Ovary (tissue), 10 donors: ENCODE measurements at regions of chr1 and their contacts with region 1.

Region 1: GRCh38 chr1:110766025-110766647 is 91.4 kb upstream of the KCNA3 start:
- DNase-seq: peak in 1 of 5 donors; percentile 37
- H3K4me3 ChIP-seq: no peak overlapping the region
- H3K27ac ChIP-seq: no peak overlapping the region
- H3K4me1 ChIP-seq: no peaks in the 10 kb centered on the region
- H3K27me3 ChIP-seq: no peaks in the 10 kb centered on the region
- CTCF ChIP-seq: peak in 2 of 3 donors; percentile 61 to 76
- EP300 ChIP-seq: no peak
- POLR2A ChIP-seq: no peak

Region 2: DNA sequence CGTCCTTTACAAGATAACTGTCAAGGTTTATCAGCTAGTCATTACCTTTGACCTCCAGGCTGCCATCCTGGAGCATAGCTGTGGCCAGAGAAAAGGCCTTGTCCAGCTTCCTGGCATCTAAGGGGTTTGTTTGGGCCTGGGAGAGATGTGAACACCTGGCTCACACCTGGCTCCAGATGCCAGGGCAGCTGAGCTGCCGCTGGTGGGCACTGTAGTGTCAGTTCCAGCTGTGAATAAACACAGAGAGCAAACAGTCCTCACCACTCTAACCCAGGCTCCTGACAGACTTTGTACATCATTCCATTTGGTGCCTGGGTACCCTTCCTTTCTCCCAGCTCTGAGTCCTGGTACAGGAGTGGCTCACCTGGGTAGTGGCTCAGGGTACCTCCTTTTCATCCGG is 232.9 kb before region 1 on chr1:
- intact Hi-C with region 1: loop called in 1 of 4 experiments (anchors 5 kb)
- DNase-seq: no peak
- H3K4me3 ChIP-seq: no peak overlapping the region
- H3K27ac ChIP-seq: no peak overlapping the region
- H3K4me1 ChIP-seq: no peaks in the 10 kb centered on the region
- H3K27me3 ChIP-seq: no peaks in the 10 kb centered on the region
- CTCF ChIP-seq: no peak
- EP300 ChIP-seq: no peak
- POLR2A ChIP-seq: no peak

Region 3: GRCh38 chr1:110554871-110555801 is 211.0 kb before region 1 on chr1:
- intact Hi-C with region 1: no loop called
- DNase-seq: peak in 4 of 5 donors; percentile 10 to 56 (median 38)
- H3K4me3 ChIP-seq: peak overlapping the region; percentile 0
- H3K27ac ChIP-seq: no peak overlapping the region
- H3K4me1 ChIP-seq: no peaks in the 10 kb centered on the region
- H3K27me3 ChIP-seq: no peaks in the 10 kb centered on the region
- CTCF ChIP-seq: peak in 1 of 3 donors; percentile 30
- EP300 ChIP-seq: no peak
- POLR2A ChIP-seq: no peak

Region 4: DNA sequence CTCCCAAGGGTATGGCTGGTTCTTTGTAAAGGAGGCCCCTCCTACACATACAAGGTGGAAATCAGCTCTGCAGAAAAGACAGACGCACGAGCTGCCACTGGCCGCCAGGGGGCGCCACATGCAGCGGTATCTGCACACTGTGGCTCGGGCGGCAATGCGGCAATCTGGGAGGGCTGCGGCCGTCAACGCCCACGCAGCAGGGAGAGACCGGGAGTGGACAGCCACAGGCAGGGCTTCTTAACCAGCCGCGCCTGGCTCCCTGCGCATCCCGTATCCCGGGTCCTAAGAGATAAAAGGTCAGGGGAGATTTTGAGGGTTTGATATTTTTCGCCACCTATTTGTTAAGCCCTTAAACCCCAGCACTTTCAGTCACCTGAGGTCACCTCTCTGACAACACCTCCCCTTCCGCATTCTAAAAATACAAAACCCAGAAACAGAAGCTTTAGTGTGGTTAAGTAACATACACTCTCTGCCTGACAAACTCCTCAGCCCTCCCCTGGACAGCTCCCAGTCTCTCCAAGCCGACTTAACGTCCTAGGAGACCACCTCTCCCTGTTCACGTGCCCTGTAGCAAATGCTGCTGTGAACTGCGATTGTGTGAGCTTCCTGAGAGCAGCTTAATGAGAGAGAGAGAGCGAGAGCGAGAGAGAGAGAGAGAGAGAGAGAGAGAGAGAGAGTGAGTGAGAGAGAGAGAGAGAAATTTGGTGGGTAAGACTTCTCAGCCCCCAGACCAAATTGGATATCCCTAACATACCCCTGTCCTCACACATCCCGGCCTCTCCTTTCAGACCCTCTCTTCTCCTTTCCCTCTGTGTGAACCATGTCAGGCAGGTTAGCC is 146.5 kb before region 1 on chr1:
- intact Hi-C with region 1: loop called in 2 of 4 experiments (anchors 5 kb)
- DNase-seq: peak; percentile 62 to 83 (median 77)
- H3K4me3 ChIP-seq: no peak overlapping the region
- H3K27ac ChIP-seq: no peak overlapping the region
- H3K4me1 ChIP-seq: peaks cover 3% of the 10 kb centered on the region
- H3K27me3 ChIP-seq: no peaks in the 10 kb centered on the region
- CTCF ChIP-seq: peak; percentile 70 to 79 (median 73)
- EP300 ChIP-seq: no peak
- POLR2A ChIP-seq: no peak

Region 5: DNA sequence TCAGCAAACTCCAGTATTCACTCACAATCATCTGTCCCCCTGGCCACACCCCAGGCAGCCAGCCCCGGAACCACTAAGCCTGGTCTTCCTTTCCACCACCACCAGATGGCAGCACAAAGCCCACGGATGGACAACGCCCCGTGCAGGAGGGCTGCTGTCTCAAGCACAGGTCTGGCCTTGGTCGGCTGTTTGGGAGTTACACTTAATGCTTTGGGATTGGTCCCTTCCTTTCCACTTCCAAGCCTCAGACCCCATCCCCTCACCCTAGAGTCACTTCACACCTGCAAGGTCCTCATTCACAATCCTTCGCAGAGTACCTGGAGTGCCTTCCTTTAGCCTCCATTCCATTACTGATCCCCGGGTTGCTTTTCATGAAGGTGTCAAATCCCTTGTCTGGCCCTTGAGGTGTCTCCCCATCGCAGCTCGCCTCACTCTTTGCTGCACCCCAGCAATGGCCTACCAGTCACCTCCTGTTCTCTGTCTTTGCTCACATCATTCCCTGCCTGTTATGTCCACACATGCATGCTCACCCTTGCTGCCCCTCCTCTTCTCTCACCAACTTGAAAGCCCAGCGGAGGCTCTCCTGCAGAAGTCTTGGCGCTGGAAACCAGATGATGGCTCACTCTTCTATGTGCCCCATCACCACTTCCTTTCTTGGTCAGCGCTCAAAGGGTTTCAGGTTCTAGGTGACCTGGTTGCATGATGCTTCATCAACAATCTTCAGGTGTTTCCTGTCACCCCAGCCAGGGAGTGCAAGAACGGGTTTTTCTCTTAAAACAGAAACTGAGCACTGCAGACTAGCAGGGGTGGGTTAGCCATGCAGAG is 135.1 kb before region 1 on chr1:
- intact Hi-C with region 1: loop called in 3 of 4 experiments (anchors 2 to 5 kb)
- DNase-seq: peak; percentile 63 to 79 (median 75)
- H3K4me3 ChIP-seq: no peak overlapping the region
- H3K27ac ChIP-seq: no peak overlapping the region
- H3K4me1 ChIP-seq: peaks cover 9% of the 10 kb centered on the region
- H3K27me3 ChIP-seq: no peaks in the 10 kb centered on the region
- CTCF ChIP-seq: peak; percentile 52 to 63 (median 59)
- EP300 ChIP-seq: no peak
- POLR2A ChIP-seq: no peak

Region 6: DNA sequence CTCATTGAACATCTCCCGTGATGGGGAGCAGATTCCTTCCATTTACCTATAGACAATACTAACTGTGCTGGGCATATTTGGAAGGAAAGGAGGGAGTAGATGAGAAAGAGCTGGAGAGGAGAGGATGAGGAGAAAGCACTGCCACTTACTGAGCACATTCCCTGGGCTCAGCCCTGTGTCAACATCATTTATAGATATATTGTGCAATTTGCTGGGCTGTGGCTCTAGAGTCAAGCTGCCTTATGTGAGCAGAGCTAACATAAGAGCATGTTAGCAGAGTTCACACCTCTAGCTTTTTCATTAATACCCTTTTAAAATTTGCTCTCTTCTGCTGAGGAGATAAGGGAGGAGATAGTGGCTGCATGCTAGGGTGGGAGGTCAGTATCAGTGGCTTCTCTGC is 84.5 kb after region 1 on chr1:
- intact Hi-C with region 1: no loop called
- DNase-seq: no peak
- H3K4me3 ChIP-seq: no peak overlapping the region
- H3K27ac ChIP-seq: no peak overlapping the region
- H3K4me1 ChIP-seq: no peaks in the 10 kb centered on the region
- H3K27me3 ChIP-seq: no peaks in the 10 kb centered on the region
- CTCF ChIP-seq: no peak
- EP300 ChIP-seq: no peak
- POLR2A ChIP-seq: no peak